ENCODE measurements at regions of chr3 and their contacts with region 1.

Region 1: DNA sequence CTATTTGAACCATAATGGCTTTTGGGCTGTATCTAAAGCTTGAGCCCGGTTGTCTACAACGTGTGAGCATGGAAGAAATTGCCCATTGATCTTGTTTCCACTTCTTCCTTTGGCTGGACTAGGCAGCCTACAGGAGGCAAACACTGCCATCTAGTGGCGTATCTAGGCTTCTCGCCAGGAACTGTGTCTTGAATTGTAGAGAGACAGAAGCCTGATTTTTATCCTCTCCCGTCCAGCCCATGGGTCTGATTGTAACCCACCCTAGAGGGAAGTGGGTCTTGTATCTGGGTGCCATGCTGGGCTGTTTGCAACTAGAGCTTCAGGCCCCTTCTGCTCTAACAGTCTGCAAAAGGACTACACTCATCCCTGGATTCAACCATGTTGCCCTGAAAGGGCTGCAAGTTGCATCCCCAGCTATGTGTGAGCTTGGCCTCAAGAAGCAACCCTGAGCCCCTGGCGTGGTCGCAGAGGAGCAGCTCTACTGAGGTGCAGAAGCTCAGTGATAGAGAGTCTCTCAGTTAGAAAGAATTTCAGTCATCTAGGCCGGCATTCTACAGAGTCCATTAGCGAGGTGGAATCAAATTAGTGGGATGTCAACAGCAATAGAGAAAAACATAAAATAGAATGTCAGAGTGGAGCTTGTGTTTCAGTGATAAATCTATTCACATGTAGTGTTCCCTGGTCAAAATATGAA is 170.2 kb upstream of the UMPS start:
- DNase-seq: peak; percentile 71
- H3K4me3 Mint-ChIP-seq: no peak overlapping the region
- H3K27ac Mint-ChIP-seq: no peak overlapping the region
- H3K4me1 Mint-ChIP-seq: no peaks in the 10 kb centered on the region
- H3K27me3 Mint-ChIP-seq: peaks cover 67% of the 10 kb centered on the region

Region 2: GRCh38 chr3:124545891-124546290 is 14.1 kb before region 1 on chr3:
- CTCF ChIA-PET with region 1: interaction called, 15 read pairs
- POLR2A ChIA-PET with region 1: no interaction called
- DNase-seq: no peak
- H3K4me3 Mint-ChIP-seq: no peak overlapping the region
- H3K27ac Mint-ChIP-seq: no peak overlapping the region
- H3K4me1 Mint-ChIP-seq: no peaks in the 10 kb centered on the region
- H3K27me3 Mint-ChIP-seq: peaks cover 46% of the 10 kb centered on the region

Region 3: DNA sequence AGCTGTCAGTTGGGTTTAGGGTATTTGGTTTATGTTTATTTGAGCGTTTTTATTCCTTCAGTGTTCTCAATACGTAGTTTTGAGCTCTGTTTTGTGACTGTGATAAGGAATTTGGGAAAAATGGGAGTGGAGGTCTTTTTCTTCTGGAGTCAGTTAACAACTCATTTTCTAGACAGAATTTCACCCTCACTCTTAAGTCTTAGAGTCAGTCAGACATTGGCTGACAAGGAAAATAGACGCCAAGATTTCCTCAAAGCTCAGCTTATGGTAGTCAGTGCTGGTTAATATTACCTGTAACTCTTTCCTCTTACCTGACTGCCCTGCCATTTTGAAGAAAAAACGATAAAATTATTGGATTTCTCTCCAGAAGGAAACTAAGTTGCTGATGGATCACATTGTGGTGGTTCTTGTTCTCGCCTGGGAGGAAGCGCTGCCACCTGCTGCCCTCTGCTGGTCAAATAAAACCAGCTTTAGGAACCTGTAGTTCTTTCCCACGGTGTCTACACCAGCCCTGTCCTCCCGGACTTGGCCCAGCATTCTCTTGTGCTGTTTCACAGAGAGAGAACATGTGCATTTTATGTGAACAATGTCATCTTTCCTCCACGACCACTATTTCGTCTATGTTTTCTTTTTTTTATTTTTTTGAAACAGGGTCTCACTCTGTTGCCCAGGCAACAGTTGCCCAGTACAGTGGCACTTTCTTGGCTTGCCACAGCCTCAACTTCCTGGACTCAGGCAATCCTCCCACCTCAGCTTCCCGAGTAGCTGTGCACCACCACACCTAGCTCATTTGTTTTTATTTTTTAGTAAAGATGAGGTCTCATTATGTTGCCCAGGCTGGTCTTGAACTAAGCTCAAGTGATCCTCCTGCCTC is 128.8 kb after region 1 on chr3:
- CTCF ChIA-PET with region 1: interaction called, 12 read pairs
- POLR2A ChIA-PET with region 1: interaction called, 5 read pairs
- DNase-seq: peak; percentile 79
- H3K4me3 Mint-ChIP-seq: no peak overlapping the region
- H3K27ac Mint-ChIP-seq: no peak overlapping the region
- H3K4me1 Mint-ChIP-seq: peaks cover 4% of the 10 kb centered on the region
- H3K27me3 Mint-ChIP-seq: peaks cover 22% of the 10 kb centered on the region

Measured in activated CD4-positive, alpha-beta T cell treated with anti-CD3 and anti-CD28 coated beads, Interleukin-2, amount 10 ng/mL, durations not matched to agents 7 days and 5 days (primary cell).